ENCODE measurements at regions of chr14 and their contacts with region 1.

Region 1: DNA sequence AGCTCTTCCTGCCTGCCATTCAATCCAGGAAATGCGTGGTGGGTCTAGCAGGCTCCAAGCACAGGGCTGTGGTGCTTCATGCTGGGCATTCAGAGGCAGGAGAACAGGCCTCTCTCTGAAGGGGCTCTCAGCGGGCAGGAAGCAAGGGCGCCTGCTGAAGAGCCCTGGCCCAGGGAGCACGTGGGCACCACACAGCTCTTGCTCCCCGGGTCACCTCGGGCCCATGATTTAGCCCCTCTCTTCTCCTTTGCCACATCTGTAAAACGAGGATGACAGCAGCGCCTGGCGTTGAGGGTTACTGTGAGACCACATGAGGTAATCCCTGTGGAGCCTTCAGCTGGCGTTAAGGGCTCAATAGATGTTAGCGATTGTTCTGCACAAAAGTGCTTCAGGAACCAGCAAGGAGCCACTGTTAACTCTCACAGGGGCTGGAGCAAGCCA is 37.6 kb upstream of the SPTLC2 start:
- DNase-seq: no peak
- ATAC-seq: no peak
- H3K4me3 ChIP-seq: no peak overlapping the region
- H3K27ac ChIP-seq: no peak overlapping the region
- H3K4me1 ChIP-seq: no peaks in the 10 kb centered on the region
- H3K27me3 ChIP-seq: no peaks in the 10 kb centered on the region
- CTCF ChIP-seq: no peak

Region 2: DNA sequence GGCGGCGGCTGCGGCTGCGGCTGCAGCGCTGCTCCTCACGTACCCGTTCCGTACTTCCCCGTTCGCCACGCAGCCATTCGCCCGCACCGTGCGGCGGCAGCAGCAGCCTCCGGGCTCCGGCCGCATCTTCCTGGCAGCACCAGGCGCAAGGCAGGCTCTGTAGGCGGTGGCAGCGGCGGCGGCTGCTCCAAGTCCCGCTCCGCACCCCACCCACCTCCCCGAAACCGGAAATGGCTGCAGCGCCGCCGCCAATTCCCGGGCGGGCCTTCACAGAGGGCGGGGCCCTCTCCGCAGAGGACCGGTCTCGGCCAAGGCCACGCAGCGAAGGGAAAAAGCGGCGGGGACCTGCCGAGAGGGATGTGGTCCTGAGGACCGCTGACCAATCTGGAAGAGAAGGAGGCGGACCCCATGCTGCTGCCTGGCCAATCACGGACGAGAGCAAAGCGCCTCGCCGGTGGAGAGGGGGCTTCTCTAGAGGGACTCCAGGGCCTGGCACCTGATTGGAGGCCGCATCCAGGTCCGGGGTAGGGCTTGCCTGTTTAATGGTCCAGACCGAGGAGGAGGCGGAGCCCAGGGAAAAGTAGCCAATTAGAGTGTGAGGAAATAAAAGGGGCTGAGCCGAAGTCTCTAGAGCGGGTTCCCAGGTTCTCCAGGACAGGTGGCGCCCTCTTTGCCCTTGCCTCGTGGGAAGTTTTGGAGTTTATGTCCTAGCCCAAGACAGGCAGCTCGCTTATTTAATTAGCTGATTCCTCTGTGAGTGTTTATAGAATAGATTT is 37.4 kb before region 1 on chr14 and contains the start of gene SPTLC2:
- intact Hi-C with region 1: no loop called
- DNase-seq: peak; percentile 97 to 99
- ATAC-seq: peak; percentile 97 to 100 (median 99)
- H3K4me3 ChIP-seq: peak within 1 kb of the TSS; percentile 90
- H3K27ac ChIP-seq: peak within 1 kb of the TSS; percentile 67
- H3K4me1 ChIP-seq: peaks cover 9% of the 10 kb centered on the region
- H3K27me3 ChIP-seq: no peaks in the 10 kb centered on the region
- CTCF ChIP-seq: no peak
- total RNA-seq, gene SPTLC2: 5.8 to 9.0 (median 6.6) TPM

Region 3: GRCh38 chr14:77825895-77826519 is 172.0 kb after region 1 on chr14:
- intact Hi-C with region 1: loop called in 1 of 2 experiments (anchors 10 kb)
- DNase-seq: no peak
- ATAC-seq: peak in 1 of 4 donors; percentile 37
- H3K4me3 ChIP-seq: no peak overlapping the region
- H3K27ac ChIP-seq: no peak overlapping the region
- H3K4me1 ChIP-seq: no peaks in the 10 kb centered on the region
- H3K27me3 ChIP-seq: no peaks in the 10 kb centered on the region
- CTCF ChIP-seq: no peak